Posterior vena cava (tissue), 2 donors: ENCODE measurements at regions of chr14 and their contacts with region 1.

Region 1: DNA sequence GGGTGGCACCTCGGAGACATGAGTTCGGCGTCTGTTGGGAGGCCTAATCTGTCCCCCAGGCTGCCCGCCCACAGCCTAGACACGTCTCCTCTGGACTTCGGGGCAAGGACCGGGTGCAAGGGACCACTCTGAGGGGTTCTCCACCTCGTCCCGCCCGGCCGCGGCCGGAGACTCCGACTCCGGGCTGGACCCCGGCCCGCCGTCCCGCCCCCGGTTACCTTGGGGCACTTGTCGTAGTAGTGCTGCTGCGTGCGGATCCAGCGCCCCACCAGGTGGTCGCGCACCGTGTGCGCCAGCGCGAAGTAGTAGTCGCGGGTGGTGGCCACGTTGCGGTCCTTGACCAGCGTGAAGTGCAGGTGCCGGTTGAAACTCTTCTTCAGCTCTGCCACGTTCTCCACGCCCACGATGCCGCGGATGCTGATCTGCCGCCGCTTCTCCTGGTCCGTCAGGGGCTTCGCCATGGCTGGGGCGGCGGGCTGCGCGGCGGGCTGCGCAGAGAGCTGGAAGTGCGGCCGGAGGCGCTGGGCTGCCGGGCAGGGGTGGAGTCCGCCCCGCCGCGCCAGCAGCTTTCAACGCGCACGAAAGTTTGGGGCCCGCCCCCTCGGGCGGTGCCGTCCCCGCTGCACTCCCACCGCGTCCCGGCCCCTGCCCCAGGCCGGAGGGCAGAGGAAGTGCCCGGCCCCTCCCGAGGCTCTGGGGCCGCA is at the start of gene PYGL:
- DNase-seq: peak; percentile 95
- total RNA-seq, gene PYGL: 45.5 to 52.0 TPM

Region 2: GRCh38 chr14:51239813-51240803 is 296.0 kb after region 1 on chr14 and contains the start of gene TMX1:
- intact Hi-C with region 1: loop called in 1 of 2 experiments (anchors 10 kb)
- DNase-seq: peak; percentile 98
- total RNA-seq, gene TMX1: 22.4 to 26.0 TPM

Region 3: DNA sequence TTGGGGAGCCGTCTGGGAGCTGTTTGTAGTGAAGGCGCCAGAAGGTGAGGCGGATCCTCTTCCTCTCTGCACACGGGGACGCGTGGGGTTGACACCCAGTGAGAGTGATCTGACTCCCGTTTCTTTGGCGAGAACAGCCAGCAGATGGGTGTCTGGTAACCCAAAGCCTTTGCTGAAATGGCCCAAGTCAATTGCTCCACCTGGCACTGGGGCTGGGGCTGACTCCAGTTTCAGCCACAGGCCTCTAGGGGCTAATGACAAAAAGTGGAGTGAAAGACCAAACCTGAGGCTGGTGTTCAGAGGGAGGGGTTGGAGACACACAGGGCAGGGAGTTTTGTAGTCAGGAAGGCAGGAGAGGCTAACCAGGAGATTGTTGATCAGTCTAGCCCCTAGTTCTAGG is 794.7 kb after region 1 on chr14:
- intact Hi-C with region 1: no loop called
- DNase-seq: no peak